ENCODE measurements at regions of chr5 and their contacts with region 1.

Region 1: GRCh38 chr5:122316652-122317051 is 4.6 kb downstream of the SNCAIP start:
- DNase-seq: peak; percentile 4
- H3K4me3 ChIP-seq: no peak overlapping the region
- H3K27ac ChIP-seq: no peak overlapping the region
- H3K4me1 ChIP-seq: no peaks in the 10 kb centered on the region
- CTCF ChIP-seq: no peak

Region 2: GRCh38 chr5:122300374-122300773 is 16.3 kb before region 1 on chr5:
- CTCF ChIA-PET with region 1: no interaction called
- POLR2A ChIA-PET with region 1: interaction called, 3 read pairs
- intact Hi-C with region 1: loop called (anchors 2 kb)
- DNase-seq: peak; percentile 9
- H3K4me3 ChIP-seq: no peak overlapping the region
- H3K27ac ChIP-seq: no peak overlapping the region
- H3K4me1 ChIP-seq: no peaks in the 10 kb centered on the region
- CTCF ChIP-seq: no peak

Region 3: DNA sequence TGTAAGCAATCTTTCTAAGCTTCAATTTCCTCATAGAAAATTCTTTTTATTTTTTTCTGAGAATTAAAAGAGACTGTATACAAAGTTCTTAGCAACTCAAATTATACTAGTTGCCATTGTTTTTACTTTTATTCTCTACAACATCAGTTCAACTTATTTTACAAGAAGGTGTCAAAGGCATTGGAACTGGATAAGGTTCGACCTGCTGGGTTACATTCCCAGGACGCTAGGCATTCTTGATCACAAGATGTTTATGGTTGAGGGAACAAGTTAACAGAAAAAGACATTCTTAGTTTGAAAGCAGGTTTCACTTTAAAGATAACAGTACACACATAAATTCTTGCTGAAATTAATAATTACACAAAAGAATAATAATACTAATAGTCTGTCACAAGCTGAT is 294.7 kb after region 1 on chr5:
- CTCF ChIA-PET with region 1: no interaction called
- POLR2A ChIA-PET with region 1: no interaction called
- intact Hi-C with region 1: no loop called
- DNase-seq: no peak
- H3K4me3 ChIP-seq: no peak overlapping the region
- H3K27ac ChIP-seq: no peak overlapping the region
- H3K4me1 ChIP-seq: no peaks in the 10 kb centered on the region
- CTCF ChIP-seq: no peak